Endothelial cell of umbilical vein (primary cell): ENCODE measurements at regions of chr2 and their contacts with region 1.

Region 1: GRCh38 chr2:113138428-113139322 is 11.3 kb downstream of the IL1RN start:
- DNase-seq: peak; percentile 62
- H3K4me3 ChIP-seq: no peak overlapping the region
- H3K27ac ChIP-seq: no peak overlapping the region
- H3K4me1 ChIP-seq: no peaks in the 10 kb centered on the region
- H3K27me3 ChIP-seq: peaks cover 0 to 6% of the 10 kb centered on the region in 2 experiments
- CTCF ChIP-seq: peak; percentile 47 to 69
- POLR2A ChIP-seq: no peak

Region 2: DNA sequence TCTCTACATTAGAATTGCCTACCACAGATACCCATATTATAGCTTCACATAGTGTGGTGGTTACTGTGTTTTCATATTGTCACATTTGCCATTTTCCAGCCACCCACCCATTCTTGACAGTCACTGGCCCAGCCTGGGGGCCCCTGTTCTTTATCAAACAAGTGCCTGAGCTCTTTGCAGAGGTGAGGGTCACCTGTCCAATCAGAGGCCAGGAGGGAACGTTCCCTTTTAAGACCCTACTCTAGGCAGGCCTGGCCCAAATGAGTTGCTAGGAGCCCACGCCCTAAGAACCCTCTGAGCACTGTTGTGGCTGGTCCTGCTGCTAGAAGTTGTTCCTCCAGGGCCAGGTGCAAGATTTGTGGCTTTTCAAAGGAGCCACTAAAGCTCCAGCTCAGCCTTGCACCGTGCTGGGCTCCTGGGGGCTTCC is 222.5 kb before region 1 on chr2:
- CTCF ChIA-PET with region 1: no interaction called
- POLR2A ChIA-PET with region 1: no interaction called
- dilution Hi-C with region 1: no loop called
- intact Hi-C with region 1: no loop called
- DNase-seq: no peak
- H3K4me3 ChIP-seq: no peak overlapping the region
- H3K27ac ChIP-seq: no peak overlapping the region
- H3K4me1 ChIP-seq: no peaks in the 10 kb centered on the region
- H3K27me3 ChIP-seq: peaks cover 8 to 14% of the 10 kb centered on the region in 2 experiments
- CTCF ChIP-seq: no peak
- POLR2A ChIP-seq: no peak

Region 3: DNA sequence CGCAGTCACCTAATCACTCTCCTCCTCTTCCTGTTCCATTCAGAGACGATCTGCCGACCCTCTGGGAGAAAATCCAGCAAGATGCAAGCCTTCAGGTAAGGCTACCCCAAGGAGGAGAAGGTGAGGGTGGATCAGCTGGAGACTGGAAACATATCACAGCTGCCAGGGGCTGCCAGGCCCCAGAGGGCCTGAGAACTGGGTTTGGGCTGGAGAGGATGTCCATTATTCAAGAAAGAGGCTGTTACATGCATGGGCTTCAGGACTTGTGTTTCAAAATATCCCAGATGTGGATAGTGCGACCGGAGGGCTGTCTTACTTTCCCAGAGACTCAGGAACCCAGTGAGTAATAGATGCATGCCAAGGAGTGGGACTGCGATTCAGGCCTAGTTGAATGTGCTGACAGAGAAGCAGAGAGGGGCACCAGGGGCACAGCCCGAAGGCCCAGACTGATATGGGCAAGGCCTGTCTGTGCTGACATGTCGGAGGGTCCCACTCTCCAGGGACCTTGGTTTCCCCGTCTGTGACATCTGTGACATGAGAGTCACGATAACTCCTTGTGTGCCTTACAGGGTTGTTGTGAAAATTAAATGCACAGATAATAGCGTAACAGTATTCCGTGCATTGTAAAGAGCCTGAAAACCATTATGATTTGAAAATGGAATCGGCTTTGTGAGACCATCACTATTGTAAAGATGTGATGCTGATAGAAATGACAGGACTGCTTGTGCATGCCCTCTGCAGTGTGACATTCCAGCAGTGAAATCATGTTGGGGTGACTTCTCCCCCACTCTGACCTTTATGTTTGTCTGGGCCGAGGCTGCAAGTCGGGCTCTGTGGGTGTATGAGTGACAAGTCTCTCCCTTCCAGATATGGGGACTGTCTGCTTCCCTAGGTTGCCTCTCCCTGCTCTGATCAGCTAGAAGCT is 10.8 kb before region 1 on chr2:
- CTCF ChIA-PET with region 1: interaction called, 23 read pairs
- POLR2A ChIA-PET with region 1: no interaction called
- dilution Hi-C with region 1: no loop called
- intact Hi-C with region 1: no loop called
- DNase-seq: no peak
- H3K4me3 ChIP-seq: no peak overlapping the region
- H3K27ac ChIP-seq: no peak overlapping the region
- H3K4me1 ChIP-seq: peaks cover 11% of the 10 kb centered on the region
- H3K27me3 ChIP-seq: peaks cover 0 to 2% of the 10 kb centered on the region in 2 experiments
- CTCF ChIP-seq: no peak
- POLR2A ChIP-seq: no peak

Region 4: GRCh38 chr2:113164930-113165585 is 26.4 kb after region 1 on chr2:
- CTCF ChIA-PET with region 1: interaction called, 48 read pairs
- POLR2A ChIA-PET with region 1: no interaction called
- dilution Hi-C with region 1: no loop called
- intact Hi-C with region 1: no loop called
- DNase-seq: no peak
- H3K4me3 ChIP-seq: no peak overlapping the region
- H3K27ac ChIP-seq: no peak overlapping the region
- H3K4me1 ChIP-seq: peaks cover 4% of the 10 kb centered on the region
- H3K27me3 ChIP-seq: peaks cover 0 to 20% of the 10 kb centered on the region in 2 experiments
- CTCF ChIP-seq: no peak
- POLR2A ChIP-seq: no peak

Region 5: GRCh38 chr2:113198790-113199612 is 60.3 kb after region 1 on chr2:
- CTCF ChIA-PET with region 1: interaction called, 310 read pairs
- POLR2A ChIA-PET with region 1: interaction called, 12 read pairs
- dilution Hi-C with region 1: no loop called
- intact Hi-C with region 1: loop called (anchors 1 kb)
- DNase-seq: peak; percentile 62
- H3K4me3 ChIP-seq: peak overlapping the region; percentile 37 to 57 (median 55)
- H3K27ac ChIP-seq: no peak overlapping the region
- H3K4me1 ChIP-seq: peaks cover 6% of the 10 kb centered on the region
- H3K27me3 ChIP-seq: peaks cover 0 to 1% of the 10 kb centered on the region in 2 experiments
- CTCF ChIP-seq: peak; percentile 89 to 91
- POLR2A ChIP-seq: no peak

Region 6: DNA sequence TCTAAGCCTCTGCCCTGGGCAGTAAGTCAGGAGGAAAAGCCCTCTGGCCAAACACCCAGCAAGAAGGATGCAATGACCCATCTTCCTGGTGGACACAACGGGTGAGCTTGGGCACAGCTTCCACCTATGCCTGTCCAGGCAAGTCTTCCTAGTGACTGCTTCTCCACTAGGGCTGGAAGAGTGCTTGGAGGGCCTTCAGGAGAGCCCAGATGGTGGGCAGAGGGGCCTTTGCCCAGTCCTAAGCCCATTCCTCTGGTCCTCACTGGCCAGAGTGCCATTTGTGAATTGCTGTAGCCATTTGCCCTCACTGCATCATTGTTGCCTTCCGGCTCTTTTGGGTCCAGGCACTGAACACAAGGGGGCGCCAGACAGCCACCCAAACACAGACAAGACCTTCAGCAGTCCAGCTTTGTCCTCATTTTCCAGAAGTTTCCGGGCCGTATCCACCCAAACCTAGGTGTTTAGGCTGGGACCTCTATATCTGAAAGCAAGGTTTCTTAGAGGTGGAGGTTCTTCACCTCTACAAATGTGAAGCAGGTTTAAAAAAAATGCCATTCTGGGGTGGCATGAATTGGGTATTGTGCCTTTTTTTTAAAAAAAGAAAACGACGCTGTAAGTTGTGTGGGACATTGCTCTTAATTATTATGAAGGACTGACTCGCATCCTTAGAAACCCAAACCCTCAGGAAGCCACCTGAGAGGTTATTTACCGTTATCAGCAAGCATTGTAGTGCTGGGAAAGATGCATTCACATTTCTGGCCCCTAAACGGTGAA is 110.5 kb after region 1 on chr2:
- CTCF ChIA-PET with region 1: interaction called, 12 read pairs
- POLR2A ChIA-PET with region 1: no interaction called
- dilution Hi-C with region 1: no loop called
- intact Hi-C with region 1: no loop called
- DNase-seq: peak; percentile 67
- H3K4me3 ChIP-seq: no peak overlapping the region
- H3K27ac ChIP-seq: no peak overlapping the region
- H3K4me1 ChIP-seq: no peaks in the 10 kb centered on the region
- H3K27me3 ChIP-seq: no peaks in the 10 kb centered on the region
- CTCF ChIP-seq: peak; percentile 90 to 91
- POLR2A ChIP-seq: no peak